ENCODE measurements at regions of chr6 and their contacts with region 1.

Region 1: DNA sequence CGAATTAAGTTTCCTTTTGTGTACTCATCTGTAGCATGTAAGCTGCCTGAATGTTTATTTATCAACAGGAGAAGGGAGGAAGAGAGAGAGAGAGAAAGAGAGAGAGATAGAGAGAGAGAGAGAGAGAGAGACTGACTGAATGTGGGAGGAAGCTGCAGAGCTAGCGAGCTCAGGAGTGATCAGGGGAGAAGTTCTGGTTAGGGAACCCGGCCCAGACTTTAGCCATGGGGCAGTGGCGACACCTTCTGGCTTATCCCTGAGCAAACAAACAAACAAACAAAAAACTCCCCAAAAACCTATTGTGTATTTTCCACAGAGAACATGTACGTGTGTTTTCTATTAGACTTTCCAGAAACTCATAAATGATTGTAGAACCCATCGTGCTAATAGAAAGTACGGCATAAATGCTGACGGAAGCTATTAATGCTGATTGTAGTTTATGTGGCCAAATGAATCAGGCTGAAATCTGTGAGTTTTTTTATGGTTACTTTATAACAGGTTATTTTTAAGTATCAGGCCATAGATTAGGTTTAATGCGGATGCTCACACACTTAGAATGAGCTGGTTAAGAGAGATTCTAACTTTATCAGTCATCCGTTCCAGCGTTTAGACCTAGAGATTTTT is 92.8 kb downstream of the CLIC5 start:
- DNase-seq: peak; percentile 52
- H3K4me3 Mint-ChIP-seq: no peak overlapping the region
- H3K27ac Mint-ChIP-seq: no peak overlapping the region
- H3K4me1 Mint-ChIP-seq: peaks cover 8% of the 10 kb centered on the region
- H3K27me3 Mint-ChIP-seq: no peaks in the 10 kb centered on the region
- CTCF ChIP-seq: peak; percentile 63

Region 2: DNA sequence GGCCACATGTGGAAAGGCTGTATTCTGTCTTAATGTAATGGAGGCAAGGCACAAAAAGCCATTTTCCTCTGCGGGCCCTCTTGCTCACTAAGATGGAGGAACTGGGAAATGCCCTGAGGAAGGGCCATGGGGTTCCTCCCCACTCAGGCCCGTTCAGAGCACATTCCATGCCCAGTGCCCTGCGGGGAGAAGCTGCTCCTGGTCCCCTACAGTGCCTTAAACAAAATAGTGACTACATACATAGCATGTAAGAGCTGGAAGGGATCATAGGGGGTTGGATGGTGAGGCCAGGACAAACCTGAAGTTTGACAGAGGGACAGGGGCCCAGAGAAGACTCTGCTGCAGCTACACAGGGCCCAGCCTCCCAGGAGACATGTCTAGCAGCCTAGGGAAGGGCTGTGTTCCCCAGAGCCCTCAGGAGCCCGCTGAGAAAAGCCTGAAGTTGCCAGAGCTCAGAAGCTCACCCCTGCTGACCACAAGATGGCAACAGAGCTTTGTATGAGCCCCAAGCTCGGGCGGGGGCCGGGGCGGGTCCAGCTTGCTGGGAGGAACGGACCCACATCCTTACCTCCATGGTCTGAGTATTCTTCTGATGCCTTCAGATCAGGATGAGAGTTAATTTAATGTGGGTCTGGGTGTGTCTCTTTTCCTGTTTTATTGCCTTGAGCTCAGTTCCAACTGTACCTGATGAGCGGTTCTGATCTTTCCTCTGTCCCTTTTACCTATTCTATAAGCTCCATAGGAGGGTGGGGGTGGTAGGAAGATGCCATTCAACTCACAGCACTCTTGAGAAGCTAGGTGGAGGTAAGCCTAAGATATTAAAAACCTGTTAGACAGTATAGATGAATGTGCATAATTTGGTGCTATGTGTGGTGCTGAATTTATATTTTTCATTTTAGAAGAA is 1292.5 kb before region 1 on chr6:
- CTCF ChIA-PET with region 1: interaction called, 17 read pairs
- intact Hi-C with region 1: no loop called
- DNase-seq: peak; percentile 70
- H3K4me3 Mint-ChIP-seq: no peak overlapping the region
- H3K27ac Mint-ChIP-seq: no peak overlapping the region
- H3K4me1 Mint-ChIP-seq: no peaks in the 10 kb centered on the region
- H3K27me3 Mint-ChIP-seq: peaks cover 57% of the 10 kb centered on the region
- CTCF ChIP-seq: peak; percentile 80

Region 3: GRCh38 chr6:45377554-45378333 is 545.1 kb before region 1 on chr6 and contains the start of gene SUPT3H:
- CTCF ChIA-PET with region 1: interaction called, 4 read pairs
- intact Hi-C with region 1: loop called (anchors 10 kb)
- DNase-seq: peak; percentile 93
- H3K4me3 Mint-ChIP-seq: peak within 1 kb of the TSS; percentile 96
- H3K27ac Mint-ChIP-seq: peak within 1 kb of the TSS; percentile 97
- H3K4me1 Mint-ChIP-seq: no peaks in the 10 kb centered on the region
- H3K27me3 Mint-ChIP-seq: no peaks in the 10 kb centered on the region
- CTCF ChIP-seq: no peak
- total RNA-seq, gene SUPT3H: 7.0 and 10.3 TPM in 2 replicates

Region 4: DNA sequence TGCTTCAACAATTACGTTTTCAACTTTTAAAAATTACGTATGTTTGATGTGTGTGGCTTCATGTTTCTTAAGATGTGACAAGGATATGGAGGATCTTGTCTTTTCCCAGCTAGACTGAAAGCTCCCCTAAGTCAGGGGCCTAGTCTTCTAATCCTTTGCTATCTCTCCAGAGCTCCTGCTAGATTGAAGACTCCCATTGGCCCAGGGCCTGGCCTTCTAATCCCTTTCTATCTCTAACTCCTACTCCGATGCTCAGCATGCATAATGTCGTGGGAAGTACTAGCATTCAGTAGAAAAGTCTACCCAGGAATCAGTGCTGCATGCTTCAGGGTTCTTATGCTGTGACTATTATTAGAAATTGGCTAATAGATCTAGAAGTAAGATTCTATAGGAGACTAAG is 400.4 kb before region 1 on chr6:
- CTCF ChIA-PET with region 1: no interaction called
- intact Hi-C with region 1: no loop called
- DNase-seq: no peak
- H3K4me3 Mint-ChIP-seq: no peak overlapping the region
- H3K27ac Mint-ChIP-seq: no peak overlapping the region
- H3K4me1 Mint-ChIP-seq: no peaks in the 10 kb centered on the region
- H3K27me3 Mint-ChIP-seq: peaks cover 13% of the 10 kb centered on the region
- CTCF ChIP-seq: no peak

Region 5: GRCh38 chr6:45595010-45595851 is 327.6 kb before region 1 on chr6:
- CTCF ChIA-PET with region 1: no interaction called
- intact Hi-C with region 1: no loop called
- DNase-seq: no peak
- H3K4me3 Mint-ChIP-seq: no peak overlapping the region
- H3K27ac Mint-ChIP-seq: no peak overlapping the region
- H3K4me1 Mint-ChIP-seq: peaks cover 37% of the 10 kb centered on the region
- H3K27me3 Mint-ChIP-seq: no peaks in the 10 kb centered on the region
- CTCF ChIP-seq: no peak

Region 6: DNA sequence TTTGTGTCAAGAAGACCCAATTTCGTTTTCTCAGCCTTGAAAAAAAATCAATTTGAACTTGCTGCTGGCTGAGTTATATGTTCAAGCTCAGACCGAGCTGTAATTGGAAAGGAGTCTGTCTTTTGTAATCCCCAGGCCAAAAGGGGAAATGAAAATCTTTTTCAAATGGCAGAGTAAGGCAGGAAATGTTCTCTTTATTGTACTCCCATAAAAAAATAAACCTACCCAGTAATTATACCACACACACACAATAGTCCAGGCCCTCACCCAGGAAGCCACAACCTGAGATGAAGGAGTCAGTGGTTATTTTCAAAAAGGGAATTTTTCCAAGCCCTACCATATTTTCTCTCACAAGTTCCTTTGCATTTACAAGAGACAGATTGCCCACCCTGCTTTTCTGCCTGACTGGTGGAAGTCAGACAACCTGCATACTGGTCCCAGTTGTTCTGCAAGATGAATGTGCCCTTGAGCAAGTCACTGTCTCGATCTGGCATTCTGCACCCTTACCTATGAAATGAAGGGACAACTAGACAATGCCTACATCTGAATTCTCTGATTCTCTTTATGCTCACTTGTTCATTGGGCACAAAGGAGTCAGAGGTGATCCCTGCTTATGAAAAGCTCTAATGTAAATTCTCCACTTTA is 47.6 kb after region 1 on chr6:
- CTCF ChIA-PET with region 1: no interaction called
- intact Hi-C with region 1: no loop called
- DNase-seq: no peak
- H3K4me3 Mint-ChIP-seq: no peak overlapping the region
- H3K27ac Mint-ChIP-seq: no peak overlapping the region
- H3K4me1 Mint-ChIP-seq: peaks cover 9% of the 10 kb centered on the region
- H3K27me3 Mint-ChIP-seq: no peaks in the 10 kb centered on the region
- CTCF ChIP-seq: no peak

Region 7: GRCh38 chr6:46000905-46001304 is 78.1 kb after region 1 on chr6:
- CTCF ChIA-PET with region 1: no interaction called
- intact Hi-C with region 1: no loop called
- DNase-seq: no peak
- H3K4me3 Mint-ChIP-seq: no peak overlapping the region
- H3K27ac Mint-ChIP-seq: no peak overlapping the region
- H3K4me1 Mint-ChIP-seq: no peaks in the 10 kb centered on the region
- H3K27me3 Mint-ChIP-seq: peaks cover 14% of the 10 kb centered on the region
- CTCF ChIP-seq: no peak

Measured in Calu3 (cell line).